ENCODE measurements at regions of chr6 and their contacts with region 1.

Region 1: GRCh38 chr6:6293317-6293716 is 27.1 kb downstream of the F13A1 start:
- DNase-seq: no peak
- ATAC-seq: peak; percentile 64
- H3K4me3 ChIP-seq: no peak overlapping the region
- H3K27ac ChIP-seq: no peak overlapping the region
- H3K4me1 ChIP-seq: no peaks in the 10 kb centered on the region
- H3K27me3 ChIP-seq: no peaks in the 10 kb centered on the region
- CTCF ChIP-seq: no peak
- EP300 ChIP-seq: no peak
- POLR2A ChIP-seq: no peak
- RAD21 ChIP-seq: no peak

Region 2: DNA sequence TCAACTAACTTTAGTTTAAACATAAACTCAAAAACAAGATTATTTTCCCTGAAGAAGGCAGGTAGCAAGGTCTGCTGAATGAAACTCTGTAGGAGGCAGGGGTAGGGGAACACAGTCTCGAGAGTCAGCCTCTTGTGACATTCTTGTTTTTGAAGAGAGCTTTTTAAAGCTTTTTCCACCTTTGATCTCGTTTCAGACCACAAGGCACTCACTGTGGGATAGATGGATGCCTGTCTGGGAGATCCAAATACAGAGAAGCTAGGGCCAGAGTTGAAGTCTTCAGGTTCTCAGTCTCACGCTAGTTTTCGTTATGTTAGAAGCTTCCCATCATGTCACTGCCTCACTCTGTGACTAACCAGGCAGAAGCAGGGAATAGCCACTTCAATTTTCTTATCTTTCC is 12.3 kb after region 1 on chr6:
- CTCF ChIA-PET with region 1: no interaction called
- POLR2A ChIA-PET with region 1: interaction called, 5 read pairs
- RAD21 ChIA-PET with region 1: no interaction called
- SMC1A ChIA-PET with region 1: interaction called, 11 read pairs
- in situ Hi-C with region 1: no loop called
- intact Hi-C with region 1: no loop called
- DNase-seq: no peak
- ATAC-seq: no peak
- H3K4me3 ChIP-seq: no peak overlapping the region
- H3K27ac ChIP-seq: no peak overlapping the region
- H3K4me1 ChIP-seq: no peaks in the 10 kb centered on the region
- H3K27me3 ChIP-seq: no peaks in the 10 kb centered on the region
- CTCF ChIP-seq: no peak
- EP300 ChIP-seq: no peak
- POLR2A ChIP-seq: no peak
- RAD21 ChIP-seq: no peak